ENCODE measurements at regions of chr19 and their contacts with region 1.

Region 1: DNA sequence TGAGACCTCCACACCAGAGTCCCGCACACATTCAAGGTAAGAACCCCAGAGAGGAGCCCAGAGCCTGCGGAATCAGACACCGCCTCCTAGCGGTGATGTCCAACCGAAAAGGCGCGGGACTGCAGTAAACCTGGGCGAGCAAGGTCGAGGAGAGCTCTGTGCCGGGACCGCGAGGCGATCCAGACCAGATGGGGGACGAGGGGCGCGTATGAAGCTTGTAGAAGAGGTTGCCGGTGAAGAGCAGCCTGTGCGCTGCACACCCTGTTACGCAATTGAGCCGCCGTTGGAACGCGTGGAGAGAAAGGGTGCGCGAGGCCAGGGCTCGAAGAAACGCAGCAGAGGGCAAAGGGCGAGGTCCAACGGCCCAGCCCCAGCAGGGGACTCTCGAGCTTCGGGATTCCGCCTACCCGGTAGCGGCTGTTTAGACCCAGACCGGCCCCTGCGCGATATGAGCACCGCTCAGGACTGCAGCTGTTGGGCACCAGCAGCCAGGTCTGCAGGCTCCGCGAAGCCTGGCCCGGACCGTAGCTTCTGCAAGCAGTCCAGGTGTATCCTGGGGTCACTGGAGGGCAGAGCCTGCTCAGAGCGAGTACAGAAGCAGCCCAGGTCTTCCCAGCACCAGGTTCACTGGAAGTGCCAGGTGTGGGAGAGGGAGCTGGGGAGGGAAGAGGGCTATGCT is 65.9 kb upstream of the ZNF599 start:
- DNase-seq: peak; percentile 21
- H3K4me3 ChIP-seq: no peak overlapping the region
- H3K27ac ChIP-seq: no peak overlapping the region
- H3K4me1 ChIP-seq: peaks cover 14% of the 10 kb centered on the region
- H3K27me3 ChIP-seq: peaks cover 0 to 4% of the 10 kb centered on the region in 2 experiments
- CTCF ChIP-seq: peak; percentile 33 to 59
- POLR2A ChIP-seq: no peak

Region 2: DNA sequence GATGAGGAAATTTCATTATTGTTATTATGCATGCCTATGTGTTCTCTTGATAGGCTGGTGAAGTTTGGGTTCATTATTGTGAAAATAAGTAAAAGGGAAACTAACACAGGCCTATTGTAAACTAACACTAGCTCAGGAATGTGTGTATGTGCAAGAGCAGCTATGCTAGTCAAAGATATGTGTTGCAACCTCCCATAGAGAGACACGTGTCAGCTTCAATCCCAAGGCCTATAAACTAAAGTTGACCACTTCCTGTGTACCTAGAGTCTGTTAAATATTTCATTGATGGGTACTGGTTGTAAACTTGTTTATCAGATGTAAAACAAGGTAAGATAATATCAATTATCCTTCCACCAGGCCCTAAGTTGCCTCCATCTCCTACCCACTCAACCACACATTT is 43.1 kb after region 1 on chr19:
- CTCF ChIA-PET with region 1: no interaction called
- POLR2A ChIA-PET with region 1: no interaction called
- dilution Hi-C with region 1: no loop called
- intact Hi-C with region 1: no loop called
- DNase-seq: no peak
- H3K4me3 ChIP-seq: no peak overlapping the region
- H3K27ac ChIP-seq: no peak overlapping the region
- H3K4me1 ChIP-seq: no peaks in the 10 kb centered on the region
- H3K27me3 ChIP-seq: no peaks in the 10 kb centered on the region
- CTCF ChIP-seq: no peak
- POLR2A ChIP-seq: no peak

Region 3: DNA sequence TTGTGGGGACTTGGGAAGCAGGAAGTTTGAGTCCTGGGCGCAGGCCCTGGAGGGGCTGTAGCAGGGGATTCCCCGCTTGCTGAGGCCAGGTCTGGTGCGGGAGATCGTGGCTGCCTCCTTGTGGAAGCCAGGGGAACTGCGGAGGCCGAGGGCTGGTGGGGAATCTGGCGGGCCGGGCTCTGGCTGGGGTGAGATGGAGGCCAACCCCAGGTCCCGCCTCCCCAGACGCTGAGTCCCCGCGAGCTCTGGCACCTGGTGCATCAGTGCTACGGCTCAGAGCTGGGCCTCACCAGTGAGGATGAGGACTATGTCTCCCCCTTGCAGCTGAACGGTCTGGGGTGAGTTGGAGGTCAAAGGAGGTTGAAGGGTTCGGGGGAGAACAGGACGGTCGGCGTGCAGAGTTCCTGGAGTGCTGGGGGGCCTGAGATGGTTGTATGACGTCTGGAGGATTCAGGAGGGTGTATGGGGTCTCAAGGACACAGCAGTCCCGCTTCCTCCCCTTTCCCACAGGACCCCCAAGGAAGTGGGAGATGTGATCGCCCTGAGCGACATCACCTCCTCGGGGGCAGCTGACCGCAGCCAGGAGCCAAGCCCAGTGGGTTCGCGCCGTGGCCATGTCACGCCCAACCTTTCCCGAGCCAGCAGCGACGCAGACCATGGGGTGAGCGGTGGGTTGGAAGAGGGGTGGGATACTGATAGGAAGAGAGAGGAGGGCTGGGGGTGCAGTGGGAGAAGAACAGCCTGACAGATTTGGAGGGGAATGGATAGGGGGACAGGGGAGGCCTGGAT is 174.3 kb after region 1 on chr19:
- CTCF ChIA-PET with region 1: no interaction called
- POLR2A ChIA-PET with region 1: no interaction called
- dilution Hi-C with region 1: no loop called
- intact Hi-C with region 1: loop called (anchors 2 kb)
- DNase-seq: peak; percentile 75
- H3K4me3 ChIP-seq: no peak overlapping the region
- H3K27ac ChIP-seq: peak overlapping the region; percentile 10
- H3K4me1 ChIP-seq: peaks cover 3% of the 10 kb centered on the region
- H3K27me3 ChIP-seq: no peaks in the 10 kb centered on the region
- CTCF ChIP-seq: peak; percentile 98 to 99
- POLR2A ChIP-seq: no peak